Activated T-helper 2 cell treated with anti-CD3 and anti-CD28 coated beads, Interferon-gamma antibody, Interleukin-2, Interleukin-4, amounts not matched to agents 10 μg/mL and 5 μg/mL and 100 μg/mL, durations not matched to agents 14 hours and 24 hours and 36 hours (primary cell): ENCODE measurements at regions of chr2 and their contacts with region 1.

Region 1: GRCh38 chr2:166127217-166128155 is at the start of gene SCN1A:
- DNase-seq: no peak
- H3K4me3 Mint-ChIP-seq: no peak within 1 kb of the TSS
- H3K27ac Mint-ChIP-seq: no peak within 1 kb of the TSS
- H3K4me1 Mint-ChIP-seq: peaks cover 4% of the 10 kb centered on the region
- H3K27me3 Mint-ChIP-seq: peaks cover 6% of the 10 kb centered on the region
- total RNA-seq, gene SCN1A: not detected in 2 replicates

Region 2: GRCh38 chr2:165401285-165401852 is 726.1 kb before region 1 on chr2:
- intact Hi-C with region 1: loop called (anchors 10 kb)
- DNase-seq: no peak
- H3K4me3 Mint-ChIP-seq: no peak overlapping the region
- H3K27ac Mint-ChIP-seq: no peak overlapping the region
- H3K4me1 Mint-ChIP-seq: peaks cover 5% of the 10 kb centered on the region
- H3K27me3 Mint-ChIP-seq: peaks cover 20% of the 10 kb centered on the region

Region 3: DNA sequence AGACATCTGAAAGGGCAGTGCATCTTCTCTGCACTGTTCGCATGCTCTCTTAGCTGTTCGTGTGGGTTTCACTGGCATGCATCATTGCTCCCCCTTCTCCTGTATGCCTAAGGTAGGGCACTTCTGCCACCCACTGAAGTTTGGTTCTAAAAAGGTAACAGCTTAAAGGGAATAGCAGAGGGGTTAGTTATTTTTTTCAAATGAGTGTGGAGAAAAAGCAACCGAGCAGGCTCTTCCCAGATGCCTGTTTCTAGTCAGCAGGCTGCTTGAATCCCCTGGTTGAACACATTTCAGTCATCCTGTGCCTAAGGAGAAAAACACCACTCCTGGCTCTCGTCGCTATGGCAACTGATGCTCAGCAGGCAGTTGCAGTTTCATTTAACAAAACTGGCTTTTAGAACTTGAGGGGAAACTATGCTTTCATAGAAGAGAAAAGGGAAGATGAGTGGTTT is 263.6 kb before region 1 on chr2:
- intact Hi-C with region 1: no loop called
- DNase-seq: no peak
- H3K4me3 Mint-ChIP-seq: no peak overlapping the region
- H3K27ac Mint-ChIP-seq: no peak overlapping the region
- H3K4me1 Mint-ChIP-seq: peaks cover 3% of the 10 kb centered on the region
- H3K27me3 Mint-ChIP-seq: no peaks in the 10 kb centered on the region

Region 4: GRCh38 chr2:166057370-166058164 is 69.9 kb before region 1 on chr2:
- intact Hi-C with region 1: loop called (anchors 1 kb)
- DNase-seq: no peak
- H3K4me3 Mint-ChIP-seq: no peak overlapping the region
- H3K27ac Mint-ChIP-seq: no peak overlapping the region
- H3K4me1 Mint-ChIP-seq: no peaks in the 10 kb centered on the region
- H3K27me3 Mint-ChIP-seq: peaks cover 4% of the 10 kb centered on the region